Calu3 (cell line): ENCODE measurements at regions of chr20 and their contacts with region 1.

Region 1: GRCh38 chr20:49713753-49714712 is at the start of gene B4GALT5:
- DNase-seq: peak; percentile 87
- H3K4me3 Mint-ChIP-seq: peak within 1 kb of the TSS; percentile 92
- H3K27ac Mint-ChIP-seq: peak within 1 kb of the TSS; percentile 89
- H3K4me1 Mint-ChIP-seq: peaks cover 47% of the 10 kb centered on the region
- H3K27me3 Mint-ChIP-seq: no peaks in the 10 kb centered on the region
- CTCF ChIP-seq: no peak
- total RNA-seq, gene B4GALT5: 117 and 131 TPM in 2 replicates

Region 2: GRCh38 chr20:49768204-49769047 is 54.4 kb after region 1 on chr20:
- CTCF ChIA-PET with region 1: interaction called, 4 read pairs
- intact Hi-C with region 1: loop called (anchors 2 kb)
- DNase-seq: peak; percentile 83
- H3K4me3 Mint-ChIP-seq: peak overlapping the region; percentile 62
- H3K27ac Mint-ChIP-seq: peak overlapping the region; percentile 97
- H3K4me1 Mint-ChIP-seq: peaks cover 72% of the 10 kb centered on the region
- H3K27me3 Mint-ChIP-seq: no peaks in the 10 kb centered on the region
- CTCF ChIP-seq: no peak

Region 3: DNA sequence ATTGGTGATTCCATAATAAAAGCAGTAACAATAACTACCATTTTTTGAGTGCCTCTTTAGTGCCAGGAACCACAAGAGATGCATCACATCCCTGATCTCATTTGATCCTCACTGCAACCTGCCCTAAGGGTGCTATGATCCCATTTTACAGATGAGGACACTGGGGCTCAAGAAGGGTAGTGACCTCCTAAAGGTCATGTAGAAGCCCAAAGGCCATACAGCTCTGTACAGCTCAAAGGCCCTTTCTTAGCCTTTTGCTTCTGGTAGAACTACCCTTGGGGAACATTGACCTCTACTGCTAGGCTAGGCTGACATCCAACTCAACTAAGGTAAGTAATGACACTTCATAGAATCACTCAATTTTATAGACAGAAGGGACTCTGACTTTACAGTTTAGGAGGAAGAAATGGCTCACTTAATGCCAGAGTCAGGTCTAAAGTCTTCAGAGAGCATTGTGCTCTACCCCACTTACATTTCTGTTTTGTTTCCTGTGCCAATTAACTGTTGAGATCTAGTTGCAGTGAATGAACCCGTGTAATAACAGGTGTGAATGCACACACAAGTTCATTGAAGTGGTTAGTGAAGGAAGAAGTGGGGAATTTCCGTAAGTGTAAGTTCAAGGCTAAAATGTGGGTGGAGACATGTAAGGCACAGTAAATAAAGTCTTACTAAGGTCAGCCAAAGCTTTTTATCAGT is 109.3 kb after region 1 on chr20:
- CTCF ChIA-PET with region 1: no interaction called
- intact Hi-C with region 1: no loop called
- DNase-seq: no peak
- H3K4me3 Mint-ChIP-seq: no peak overlapping the region
- H3K27ac Mint-ChIP-seq: no peak overlapping the region
- H3K4me1 Mint-ChIP-seq: peaks cover 25% of the 10 kb centered on the region
- H3K27me3 Mint-ChIP-seq: no peaks in the 10 kb centered on the region
- CTCF ChIP-seq: no peak